Common myeloid progenitor, CD34-positive (primary cell): ENCODE measurements at regions of chr12 and their contacts with region 1.

Region 1: GRCh38 chr12:122888232-122888867 is 7.6 kb downstream of the VPS37B start:
- DNase-seq: peak; percentile 76 to 94 (median 91)
- H3K4me3 ChIP-seq: peak overlapping the region in 6 of 7 experiments; percentile 34 to 75 (median 54)
- H3K27ac ChIP-seq: peak overlapping the region; percentile 90 to 95
- H3K4me1 ChIP-seq: peaks cover 56 to 96% (median 91%) of the 10 kb centered on the region in 4 experiments
- H3K27me3 ChIP-seq: no peaks in the 10 kb centered on the region

Region 2: DNA sequence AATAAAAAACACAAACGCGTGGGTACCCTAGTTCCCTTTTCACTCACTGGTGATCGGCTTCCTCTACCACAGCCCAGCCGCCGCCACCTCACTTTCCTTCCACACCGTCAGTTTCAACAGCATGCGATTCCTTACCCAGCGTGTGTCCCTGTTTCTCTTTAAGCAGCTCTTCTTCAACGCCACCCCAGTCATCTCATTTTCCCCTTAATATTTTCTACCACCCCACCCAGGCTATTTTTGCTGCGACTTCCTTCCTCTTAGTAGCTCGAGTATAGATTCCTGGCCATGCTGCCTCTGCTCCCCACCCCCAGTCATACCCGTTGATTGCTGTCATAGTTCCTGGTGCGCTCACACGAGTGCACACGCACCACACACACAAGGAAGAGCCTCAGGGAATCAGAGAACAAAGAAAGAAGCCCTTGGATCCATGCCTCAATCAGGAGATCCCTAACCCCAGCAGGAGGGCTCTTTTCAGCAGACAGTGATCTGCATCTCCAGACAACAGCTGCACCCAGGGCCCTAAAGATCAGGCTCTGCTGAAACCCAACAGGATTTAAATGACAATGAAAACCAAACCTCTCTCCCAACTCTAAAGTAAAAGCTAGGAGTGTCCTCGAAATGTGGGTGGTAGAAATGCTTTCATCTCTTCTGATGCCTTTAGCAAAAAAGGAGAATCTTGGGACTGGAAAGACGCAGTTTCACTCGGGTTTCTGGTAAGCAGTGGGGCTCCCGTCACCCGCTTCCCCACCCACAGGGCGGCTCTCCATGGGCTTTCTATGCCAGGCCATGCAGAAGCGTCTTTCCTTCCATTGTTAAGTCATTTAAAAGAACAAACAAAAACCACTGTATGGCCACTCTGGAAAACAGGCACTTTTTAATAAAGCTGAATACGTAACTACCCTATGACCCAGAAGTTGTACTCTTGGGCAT is 16.2 kb before region 1 on chr12:
- CTCF ChIA-PET with region 1: interaction called, 149 read pairs
- POLR2A ChIA-PET with region 1: interaction called, 8 read pairs
- DNase-seq: peak; percentile 57 to 88 (median 84)
- H3K4me3 ChIP-seq: peak overlapping the region in 6 of 7 experiments; percentile 41 to 75 (median 63)
- H3K27ac ChIP-seq: peak overlapping the region; percentile 37 to 80
- H3K4me1 ChIP-seq: peaks cover 18 to 63% (median 56%) of the 10 kb centered on the region in 4 experiments
- H3K27me3 ChIP-seq: no peaks in the 10 kb centered on the region

Region 3: GRCh38 chr12:123278101-123278627 is 389.8 kb after region 1 on chr12:
- CTCF ChIA-PET with region 1: no interaction called
- POLR2A ChIA-PET with region 1: no interaction called
- DNase-seq: peak; percentile 67 to 92 (median 89)
- H3K4me3 ChIP-seq: peak overlapping the region in 6 of 7 experiments; percentile 12 to 63 (median 28)
- H3K27ac ChIP-seq: peak overlapping the region in 1 of 2 experiments; percentile 78
- H3K4me1 ChIP-seq: peaks cover 2 to 13% (median 6%) of the 10 kb centered on the region in 4 experiments
- H3K27me3 ChIP-seq: no peaks in the 10 kb centered on the region